ENCODE measurements at regions of chr1 and their contacts with region 1.

Region 1: GRCh38 chr1:156625436-156626078 is 6.3 kb downstream of the HAPLN2 start:
- DNase-seq: peak; percentile 84
- ATAC-seq: peak; percentile 62

Region 2: DNA sequence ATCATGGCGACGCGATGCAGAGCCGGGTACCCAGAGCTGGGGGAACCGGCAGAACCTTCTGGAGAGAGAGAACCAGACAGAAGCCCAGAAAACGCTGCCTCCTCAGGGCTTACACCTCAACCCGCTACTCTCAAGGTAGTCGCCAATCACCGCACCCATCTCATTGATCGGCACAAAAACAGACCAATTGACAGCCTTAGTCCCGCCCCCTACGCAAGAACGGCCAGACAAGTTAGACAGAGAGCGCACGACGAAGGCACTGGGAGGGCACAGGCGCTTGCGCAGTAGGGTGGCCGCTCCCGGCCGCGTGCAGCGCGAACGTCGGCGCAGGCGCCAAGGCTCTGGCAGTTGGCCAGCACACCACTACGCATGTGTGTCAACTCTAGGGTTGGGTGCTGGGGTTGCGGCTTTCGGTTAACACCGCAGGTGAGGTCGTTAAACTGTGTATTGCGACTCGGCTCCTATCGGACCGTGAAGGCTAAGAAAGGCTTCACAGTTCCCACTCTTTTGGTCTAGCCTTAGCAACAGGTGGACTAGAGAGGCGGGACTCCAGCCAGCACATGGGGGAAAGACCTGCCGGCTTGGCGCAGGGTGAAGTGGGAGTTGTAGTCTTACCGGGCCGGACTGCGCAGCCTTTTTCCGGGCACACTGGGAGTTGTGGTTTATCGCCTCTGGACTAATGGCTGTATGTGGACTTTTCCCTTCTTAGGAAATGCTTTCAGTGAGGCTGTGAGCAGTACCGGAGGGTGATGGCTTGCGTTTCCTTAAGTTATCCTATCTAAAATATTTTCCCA is 287.2 kb before region 1 on chr1 and contains the starts of genes CCT3 and TSACC:
- intact Hi-C with region 1: no loop called
- DNase-seq: peak; percentile 99
- ATAC-seq: peak; percentile 98
- total RNA-seq, gene CCT3: 137 TPM
- total RNA-seq, gene TSACC: not detected

Region 3: DNA sequence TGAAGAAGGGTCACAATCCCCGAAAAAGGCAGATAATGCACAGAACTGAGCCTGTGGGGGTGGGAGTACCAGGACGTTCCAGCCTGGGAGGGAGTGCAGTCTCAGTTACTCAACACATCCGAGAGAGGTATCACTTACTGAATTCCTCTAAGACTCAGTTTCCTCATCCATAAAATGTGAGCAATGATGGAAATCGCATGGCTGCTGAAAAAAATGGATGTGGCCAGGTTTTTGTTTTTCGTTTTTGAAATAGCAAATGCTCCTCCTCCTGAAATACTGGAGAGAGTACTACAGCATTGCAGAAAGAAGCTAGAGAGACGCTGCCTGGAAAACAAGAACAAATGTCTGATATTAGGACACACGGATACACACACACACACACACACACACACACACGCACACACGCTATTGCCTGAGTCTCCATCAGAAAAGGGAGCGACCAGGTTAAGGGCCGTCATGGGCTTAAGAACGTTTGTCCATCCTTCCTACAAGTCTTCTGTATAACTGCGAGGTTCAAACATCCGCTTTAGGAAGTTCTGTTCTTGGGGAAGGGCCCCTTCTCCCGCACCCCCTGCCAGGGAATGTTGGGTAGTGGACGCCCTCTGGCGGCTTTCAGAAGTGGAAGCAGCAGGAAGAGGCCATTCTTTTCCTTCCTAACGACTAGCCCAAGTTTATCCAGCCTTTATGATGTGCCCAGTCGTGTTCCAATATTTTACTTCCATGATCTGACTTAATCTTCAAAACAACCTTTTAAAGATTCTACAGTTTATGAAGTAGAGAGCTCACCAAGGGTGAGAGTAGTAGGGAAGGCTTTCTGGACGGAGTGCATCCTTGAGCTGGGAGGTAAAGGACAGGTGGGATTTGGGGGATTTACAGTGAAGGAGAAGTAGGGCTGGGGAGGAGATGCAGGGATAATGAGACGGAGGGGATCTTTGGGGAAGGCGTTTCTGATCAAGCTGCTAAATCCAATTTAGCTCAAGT is 52.3 kb after region 1 on chr1:
- intact Hi-C with region 1: loop called (anchors 2 kb)
- DNase-seq: peak; percentile 87
- ATAC-seq: peak; percentile 74

Measured in Right ventricle myocardium inferior (tissue), 1 donor.